Activated CD8-positive, alpha-beta memory T cell treated with anti-CD3 and anti-CD28 coated beads, Interleukin-2, amount 10 ng/mL, durations not matched to agents 7 days and 5 days (primary cell): ENCODE measurements at regions of chr2 and their contacts with region 1.

Region 1: GRCh38 chr2:98649135-98649991 is 41.0 kb downstream of the UNC50 start:
- DNase-seq: peak; percentile 91
- ATAC-seq: peak; percentile 93
- H3K4me3 Mint-ChIP-seq: peak overlapping the region; percentile 2
- H3K27ac Mint-ChIP-seq: peak overlapping the region; percentile 64
- H3K4me1 Mint-ChIP-seq: peaks cover 59% of the 10 kb centered on the region
- H3K27me3 Mint-ChIP-seq: no peaks in the 10 kb centered on the region

Region 2: DNA sequence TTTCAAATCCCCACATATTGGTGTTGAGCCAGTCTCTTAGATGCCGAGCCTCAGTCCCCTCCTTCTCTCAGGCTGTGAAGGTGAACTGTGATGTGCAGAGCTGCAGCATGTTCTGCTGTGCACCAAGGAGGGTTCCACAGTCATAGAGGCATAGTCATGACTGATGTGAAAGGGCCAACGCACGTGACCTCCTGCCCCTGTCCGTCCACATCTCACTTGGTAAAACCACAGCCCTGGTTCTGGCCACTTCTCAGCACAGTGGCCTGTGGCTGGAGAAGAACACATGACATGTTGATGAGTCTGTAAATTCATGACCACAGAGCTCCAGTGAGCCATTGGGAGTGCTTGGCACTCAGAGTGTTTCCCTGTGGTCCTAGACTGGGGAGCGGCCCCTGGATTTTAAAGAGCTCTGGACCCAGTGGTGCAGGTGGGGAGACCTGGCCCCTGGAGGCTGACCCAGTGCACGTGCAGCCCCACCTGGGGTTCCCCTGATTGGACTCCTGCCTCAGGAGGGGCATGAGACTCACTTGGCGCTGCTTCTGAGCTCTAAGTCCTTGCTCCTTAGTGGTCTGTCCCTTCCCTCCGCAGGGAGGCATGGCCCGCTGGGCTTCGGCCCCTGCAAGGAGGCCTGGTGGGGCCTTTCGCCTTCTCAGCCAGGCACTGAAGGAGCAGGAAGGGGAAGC is 179.4 kb before region 1 on chr2:
- CTCF ChIA-PET with region 1: no interaction called
- DNase-seq: no peak
- ATAC-seq: no peak
- H3K4me3 Mint-ChIP-seq: no peak overlapping the region
- H3K27ac Mint-ChIP-seq: peak overlapping the region; percentile 90
- H3K4me1 Mint-ChIP-seq: peaks cover 99% of the 10 kb centered on the region
- H3K27me3 Mint-ChIP-seq: no peaks in the 10 kb centered on the region

Region 3: GRCh38 chr2:98664327-98664726 is 15.0 kb after region 1 on chr2:
- CTCF ChIA-PET with region 1: interaction called, 13 read pairs
- DNase-seq: peak; percentile 85
- ATAC-seq: peak; percentile 63
- H3K4me3 Mint-ChIP-seq: peak overlapping the region; percentile 50
- H3K27ac Mint-ChIP-seq: peak overlapping the region; percentile 99
- H3K4me1 Mint-ChIP-seq: peaks cover 63% of the 10 kb centered on the region
- H3K27me3 Mint-ChIP-seq: no peaks in the 10 kb centered on the region

Region 4: GRCh38 chr2:98731041-98731893 is 81.9 kb after region 1 on chr2 and contains the start of gene MGAT4A:
- CTCF ChIA-PET with region 1: interaction called, 20 read pairs
- DNase-seq: peak; percentile 83
- ATAC-seq: peak; percentile 87
- H3K4me3 Mint-ChIP-seq: peak within 1 kb of the TSS; percentile 90
- H3K27ac Mint-ChIP-seq: peak within 1 kb of the TSS; percentile 91
- H3K4me1 Mint-ChIP-seq: peaks cover 61% of the 10 kb centered on the region
- H3K27me3 Mint-ChIP-seq: no peaks in the 10 kb centered on the region
- total RNA-seq, gene MGAT4A: 57.4 to 72.0 TPM

Region 5: GRCh38 chr2:98749066-98749450 is 99.7 kb after region 1 on chr2:
- CTCF ChIA-PET with region 1: interaction called, 12 read pairs
- DNase-seq: no peak
- ATAC-seq: peak; percentile 35
- H3K4me3 Mint-ChIP-seq: peak overlapping the region; percentile 20
- H3K27ac Mint-ChIP-seq: peak overlapping the region; percentile 65
- H3K4me1 Mint-ChIP-seq: peaks cover 34% of the 10 kb centered on the region
- H3K27me3 Mint-ChIP-seq: no peaks in the 10 kb centered on the region

Region 6: GRCh38 chr2:98822301-98823164 is 173.2 kb after region 1 on chr2:
- CTCF ChIA-PET with region 1: interaction called, 14 read pairs
- DNase-seq: peak; percentile 72
- ATAC-seq: peak; percentile 97
- H3K4me3 Mint-ChIP-seq: peak overlapping the region; percentile 18
- H3K27ac Mint-ChIP-seq: no peak overlapping the region
- H3K4me1 Mint-ChIP-seq: peaks cover 5% of the 10 kb centered on the region
- H3K27me3 Mint-ChIP-seq: peaks cover 7% of the 10 kb centered on the region